ENCODE measurements at regions of chr5 and their contacts with region 1.

Region 1: DNA sequence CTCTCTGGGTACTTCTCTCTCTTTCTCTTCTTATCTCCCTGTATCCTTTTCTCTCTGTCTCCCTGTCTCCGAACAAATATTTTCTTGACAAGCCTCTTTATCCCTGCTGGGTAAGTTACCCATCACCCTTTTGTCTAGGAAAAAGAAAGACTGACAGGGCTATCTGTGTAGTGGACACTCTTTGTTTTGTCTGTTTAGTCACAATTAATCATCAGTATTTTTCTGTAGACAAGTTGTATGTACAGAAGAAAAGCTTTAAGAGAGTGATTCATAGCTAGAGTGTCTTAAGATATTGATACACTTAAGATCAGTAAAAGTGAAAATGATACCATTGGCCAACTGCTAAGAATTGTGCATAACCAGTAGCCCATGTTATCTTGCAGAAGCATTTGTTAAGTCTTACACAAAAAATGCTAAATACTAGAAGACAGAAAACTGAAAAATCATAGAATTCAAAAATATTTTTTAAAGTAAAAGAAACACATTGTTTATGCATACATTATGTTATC is 1043.8 kb upstream of the EDIL3 start:
- DNase-seq: no peak

Region 2: DNA sequence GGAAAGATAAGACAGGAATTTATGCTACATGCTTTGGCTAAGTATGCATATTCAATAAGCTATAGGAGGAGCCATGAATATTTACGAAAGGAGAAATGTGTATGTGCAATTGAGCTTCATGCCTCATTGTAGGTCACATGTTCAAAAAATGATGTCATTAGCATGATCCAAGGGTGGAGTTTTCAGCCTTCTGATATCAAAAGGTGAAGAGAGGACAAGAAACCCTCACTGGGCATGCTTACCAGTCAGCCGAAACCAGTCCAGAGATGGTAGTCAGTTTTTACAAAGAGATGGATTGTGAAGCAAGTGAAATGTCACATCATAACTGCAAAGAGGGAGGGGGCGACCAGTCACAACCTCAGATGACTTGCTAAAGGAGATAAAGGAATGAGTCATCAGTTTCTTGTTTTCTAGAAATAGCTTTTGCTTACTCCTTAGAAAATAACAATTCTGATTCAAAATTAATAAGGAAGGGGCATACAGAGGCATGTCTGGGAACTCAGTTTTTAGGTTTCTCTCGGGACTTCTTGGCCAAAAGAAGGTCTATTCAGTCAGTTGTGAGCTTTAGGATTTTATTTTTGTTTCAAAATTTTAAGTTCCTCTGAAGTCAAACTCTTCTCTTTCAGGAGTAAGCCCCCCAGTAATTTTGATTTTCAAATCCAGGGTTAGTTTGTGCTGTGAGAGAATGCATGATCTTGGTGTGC is 24.0 kb after region 1 on chr5:
- intact Hi-C with region 1: loop called (anchors 1 kb)
- DNase-seq: no peak

Region 3: GRCh38 chr5:85647349-85648127 is 219.1 kb after region 1 on chr5:
- intact Hi-C with region 1: no loop called
- DNase-seq: peak in 1 of 10 donors; percentile 24

Region 4: DNA sequence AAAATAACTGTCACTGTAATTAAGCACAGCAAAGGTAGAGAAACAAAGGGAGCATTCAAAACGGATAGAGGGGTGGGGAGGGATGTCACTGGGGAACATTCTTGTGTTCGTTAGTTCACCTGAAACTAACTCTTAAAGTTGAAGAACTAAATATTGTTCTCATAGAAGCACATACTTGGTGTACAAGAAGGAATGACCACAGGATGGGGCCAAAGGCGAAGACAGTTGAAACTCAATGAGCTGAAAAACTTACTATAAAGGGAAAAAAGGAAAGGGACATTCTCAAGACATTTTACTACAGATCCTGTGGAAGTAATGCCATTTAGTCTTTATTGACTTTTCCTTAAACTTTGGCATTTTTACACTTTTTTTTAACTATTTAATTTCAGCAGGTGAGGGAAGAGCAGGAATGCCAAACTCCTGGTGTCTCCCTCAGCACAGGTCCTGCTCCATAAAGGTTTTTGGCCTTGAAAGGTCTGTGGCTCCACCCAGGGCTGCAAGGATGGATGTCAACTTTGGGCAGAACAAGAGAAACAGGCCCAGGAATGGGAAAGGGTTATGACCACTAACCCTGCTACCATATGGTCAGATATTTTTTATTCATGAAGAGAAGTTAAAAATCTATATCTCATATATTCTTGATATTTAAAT is 1641.6 kb after region 1 on chr5:
- intact Hi-C with region 1: no loop called
- DNase-seq: peak in 1 of 10 donors; percentile 10